ENCODE measurements at regions of chr12 and their contacts with region 1.

Region 1: DNA sequence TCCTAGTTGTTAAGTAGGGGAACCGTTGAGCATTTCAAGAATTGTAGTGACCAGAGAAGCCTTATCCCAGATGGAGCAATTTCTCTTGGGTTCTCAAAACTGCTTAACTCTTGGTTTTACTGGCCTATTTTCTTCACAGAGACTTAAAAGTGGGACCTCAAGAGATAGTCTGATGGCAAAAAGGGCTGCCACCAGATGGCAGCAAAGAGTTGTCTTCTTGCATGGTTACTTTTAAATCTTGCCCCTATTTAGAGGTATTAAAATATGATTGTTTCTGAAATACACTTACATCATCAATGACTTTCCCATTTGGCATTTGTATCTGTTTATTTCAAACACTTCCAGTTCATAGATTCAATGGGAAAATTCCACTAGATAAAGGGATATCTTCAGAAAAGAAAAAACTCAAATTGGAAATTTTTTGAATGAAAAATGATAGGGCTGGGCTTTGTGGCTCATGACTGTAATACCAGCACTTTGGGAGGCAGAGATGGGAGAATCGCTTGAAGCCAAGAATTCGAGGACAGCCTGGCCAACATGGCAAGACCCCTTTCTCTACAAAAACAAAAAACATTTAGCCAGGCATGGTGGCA is 69.9 kb upstream of the CNTN1 start:
- DNase-seq: peak in 1 of 2 donors; percentile 54
- ATAC-seq: no peak
- H3K4me3 ChIP-seq: no peak overlapping the region
- H3K27ac ChIP-seq: no peak overlapping the region
- H3K4me1 ChIP-seq: no peaks in the 10 kb centered on the region
- H3K27me3 ChIP-seq: no peaks in the 10 kb centered on the region

Region 2: GRCh38 chr12:40921563-40922163 is 299.3 kb after region 1 on chr12:
- intact Hi-C with region 1: loop called (anchors 1 to 5 kb)
- DNase-seq: no peak
- ATAC-seq: no peak
- H3K4me3 ChIP-seq: no peak overlapping the region
- H3K27ac ChIP-seq: no peak overlapping the region
- H3K4me1 ChIP-seq: no peaks in the 10 kb centered on the region
- H3K27me3 ChIP-seq: no peaks in the 10 kb centered on the region